WTC11 (cell line): ENCODE measurements at regions of chr6 and their contacts with region 1.

Region 1: DNA sequence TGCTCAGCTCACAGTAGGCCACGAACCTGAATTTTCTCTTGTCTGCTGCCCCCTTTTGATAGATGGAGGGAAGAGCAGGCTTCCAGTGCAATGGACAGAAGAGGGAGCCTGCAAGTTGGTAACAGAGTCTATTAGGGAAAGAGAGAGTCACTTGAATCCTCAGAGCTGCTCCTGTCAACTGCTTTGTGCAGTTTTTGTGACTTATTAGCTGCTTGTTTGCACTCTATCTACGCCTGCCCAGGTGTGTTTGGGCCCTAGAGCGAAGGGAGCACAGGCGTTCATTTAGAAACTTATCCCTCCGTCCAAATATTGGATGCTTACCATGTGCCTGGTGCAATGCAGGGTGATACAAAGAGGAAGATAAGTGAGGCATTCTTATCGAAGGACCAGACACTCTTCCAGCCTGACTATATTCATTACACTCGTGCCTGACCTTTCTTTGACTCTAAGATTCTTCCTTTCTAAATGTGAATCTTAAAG is 11.6 kb upstream of the SLC2A12 start:
- DNase-seq: peak; percentile 36
- ATAC-seq: peak; percentile 51
- H3K4me3 Mint-ChIP-seq: no peak overlapping the region
- H3K27ac Mint-ChIP-seq: peak overlapping the region; percentile 57; the same call in 1 of the 2 replicates
- H3K4me1 Mint-ChIP-seq: peaks cover 37% of the 10 kb centered on the region
- H3K27me3 Mint-ChIP-seq: no peaks in the 10 kb centered on the region
- CTCF ChIP-seq: peak; percentile 19; the same call in 1 of the 2 replicates

Region 2: DNA sequence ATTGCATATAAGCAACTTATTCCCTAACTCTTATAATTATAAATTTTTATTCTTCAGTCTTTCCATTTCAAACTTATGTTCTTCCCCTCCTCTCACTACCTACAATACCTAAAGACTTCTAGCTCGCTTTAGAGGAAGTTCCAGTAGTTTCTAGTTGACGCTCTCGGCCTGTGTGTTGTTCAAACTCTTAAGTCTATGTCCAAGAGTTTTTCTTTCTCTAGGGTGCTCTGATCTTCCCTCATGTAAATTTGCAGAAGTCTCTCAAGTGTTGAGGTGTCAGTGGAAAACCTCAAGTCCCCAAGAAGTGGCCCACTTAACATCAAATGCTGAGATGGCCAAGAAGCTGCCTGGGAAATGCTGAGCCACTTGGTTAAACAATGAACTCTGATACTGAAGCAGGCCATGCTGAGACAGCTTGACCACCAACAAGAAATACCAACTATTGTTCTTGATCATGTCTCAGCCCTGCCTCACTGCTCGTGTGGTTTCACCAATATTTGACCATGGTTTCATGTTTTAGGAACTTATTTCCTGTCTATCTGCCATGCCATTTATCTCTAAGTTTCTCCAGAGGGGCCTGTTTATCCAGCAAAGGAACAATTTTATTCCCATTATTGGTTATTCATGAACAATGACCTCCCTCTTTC is 276.0 kb before region 1 on chr6:
- CTCF ChIA-PET with region 1: no interaction called
- POLR2A ChIA-PET with region 1: no interaction called
- DNase-seq: no peak
- ATAC-seq: no peak
- H3K4me3 Mint-ChIP-seq: no peak overlapping the region
- H3K27ac Mint-ChIP-seq: no peak overlapping the region
- H3K4me1 Mint-ChIP-seq: peaks cover 6% of the 10 kb centered on the region
- H3K27me3 Mint-ChIP-seq: no peaks in the 10 kb centered on the region
- CTCF ChIP-seq: no peak

Region 3: DNA sequence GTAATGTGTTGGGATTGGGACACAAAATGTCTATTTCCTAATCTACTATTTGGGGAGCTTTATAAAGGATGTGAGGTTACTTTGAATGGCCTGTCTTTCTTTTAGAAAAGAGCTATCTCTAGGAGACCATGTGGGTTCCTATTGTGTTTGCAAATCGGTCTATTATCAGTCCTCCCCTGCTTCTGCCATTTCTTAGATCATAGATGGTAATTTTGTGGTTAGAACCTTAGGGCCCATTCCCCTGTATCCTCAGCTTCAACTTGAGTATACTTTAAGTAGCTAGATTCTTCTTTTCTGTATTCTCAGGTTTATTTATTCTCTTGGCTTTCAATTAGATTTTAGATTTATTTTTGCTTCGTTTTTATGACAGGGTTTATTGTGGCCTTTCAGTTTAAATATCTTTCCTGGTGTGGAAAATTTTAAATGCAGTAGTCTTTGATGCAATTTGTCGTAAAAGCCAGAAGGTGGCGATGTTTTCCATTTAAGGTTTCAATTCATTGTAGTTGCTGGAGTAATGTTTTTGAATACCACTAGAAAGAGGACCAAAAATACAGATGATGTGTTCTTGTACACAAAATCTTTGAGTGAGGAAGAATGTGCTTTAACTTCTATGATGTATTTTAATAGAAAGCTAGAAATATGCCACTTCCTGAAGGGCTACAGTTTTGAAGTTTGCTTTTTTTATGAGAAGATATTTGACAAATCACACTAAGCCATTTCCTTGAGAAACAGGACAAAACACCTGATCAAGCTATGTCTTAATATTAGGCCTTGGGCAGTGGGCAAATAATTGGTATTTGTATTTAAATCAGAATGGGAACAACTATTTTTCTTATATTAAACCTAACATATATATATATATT is 90.7 kb before region 1 on chr6:
- CTCF ChIA-PET with region 1: interaction called, 11 read pairs
- POLR2A ChIA-PET with region 1: no interaction called
- DNase-seq: no peak
- ATAC-seq: peak; percentile 61
- H3K4me3 Mint-ChIP-seq: no peak overlapping the region
- H3K27ac Mint-ChIP-seq: peak overlapping the region; percentile 58; the same call in 1 of the 2 replicates
- H3K4me1 Mint-ChIP-seq: peaks cover 47% of the 10 kb centered on the region
- H3K27me3 Mint-ChIP-seq: no peaks in the 10 kb centered on the region
- CTCF ChIP-seq: peak; percentile 45

Region 4: GRCh38 chr6:134002821-134003220 is 61.2 kb before region 1 on chr6:
- CTCF ChIA-PET with region 1: interaction called, 14 read pairs
- POLR2A ChIA-PET with region 1: no interaction called
- DNase-seq: no peak
- ATAC-seq: no peak
- H3K4me3 Mint-ChIP-seq: no peak overlapping the region
- H3K27ac Mint-ChIP-seq: no peak overlapping the region
- H3K4me1 Mint-ChIP-seq: peaks cover 14% of the 10 kb centered on the region
- H3K27me3 Mint-ChIP-seq: no peaks in the 10 kb centered on the region
- CTCF ChIP-seq: no peak

Region 5: GRCh38 chr6:134047673-134048072 is 16.3 kb before region 1 on chr6:
- CTCF ChIA-PET with region 1: interaction called, 16 read pairs
- POLR2A ChIA-PET with region 1: interaction called, 5 read pairs
- DNase-seq: no peak
- ATAC-seq: no peak
- H3K4me3 Mint-ChIP-seq: no peak overlapping the region
- H3K27ac Mint-ChIP-seq: peak overlapping the region; percentile 85; the same call in 1 of the 2 replicates
- H3K4me1 Mint-ChIP-seq: peaks cover 17% of the 10 kb centered on the region
- H3K27me3 Mint-ChIP-seq: no peaks in the 10 kb centered on the region; the same call in 1 of the 2 replicates
- CTCF ChIP-seq: no peak

Region 6: DNA sequence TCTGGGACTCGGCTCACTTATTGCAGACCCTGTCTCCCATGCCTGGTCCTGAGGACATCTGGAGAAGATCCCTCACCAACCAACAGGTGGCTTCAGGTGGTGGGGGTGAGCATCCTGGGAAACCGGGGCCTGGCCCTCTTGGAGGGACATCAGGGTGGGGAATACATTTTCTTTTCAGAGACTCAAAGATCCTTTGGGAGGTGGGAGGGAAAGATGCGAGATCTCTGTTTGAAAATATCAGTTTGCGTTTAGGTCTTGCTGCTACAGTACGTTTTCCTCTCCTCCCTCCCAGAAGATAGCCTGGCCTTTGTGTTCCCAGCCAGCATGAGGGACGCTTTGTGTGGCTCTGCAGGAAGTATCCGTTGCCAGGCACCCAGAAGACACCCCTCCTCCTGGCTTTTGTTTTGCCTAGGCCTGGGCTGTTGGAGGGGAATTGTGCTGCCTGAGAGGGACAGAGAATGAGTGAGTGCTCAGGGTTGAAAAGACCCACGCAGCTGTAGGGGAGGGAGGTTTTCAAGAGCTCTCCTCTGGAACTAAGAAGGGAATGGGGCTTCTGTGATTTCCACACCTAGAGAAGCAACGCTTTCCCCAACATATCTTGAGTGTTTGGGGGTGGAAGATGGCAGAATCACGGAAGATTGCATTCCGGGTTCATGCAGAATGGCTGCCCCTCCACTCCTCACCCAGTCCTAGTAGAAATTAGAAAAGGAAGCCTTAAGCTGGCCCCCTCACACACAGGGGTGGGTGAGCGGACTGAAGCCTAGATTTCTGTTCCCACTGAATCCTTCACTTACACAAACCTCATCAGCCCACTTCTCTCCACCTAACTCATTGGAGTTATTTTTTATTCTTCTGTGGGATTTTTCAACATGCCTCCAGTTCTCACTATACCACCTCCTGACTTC is 10.4 kb after region 1 on chr6:
- CTCF ChIA-PET with region 1: interaction called, 21 read pairs
- POLR2A ChIA-PET with region 1: interaction called, 3 read pairs
- DNase-seq: peak; percentile 75
- ATAC-seq: peak; percentile 99
- H3K4me3 Mint-ChIP-seq: peak overlapping the region; percentile 56
- H3K27ac Mint-ChIP-seq: peak overlapping the region; percentile 83
- H3K4me1 Mint-ChIP-seq: peaks cover 18% of the 10 kb centered on the region
- H3K27me3 Mint-ChIP-seq: no peaks in the 10 kb centered on the region
- CTCF ChIP-seq: no peak

Region 7: GRCh38 chr6:134340179-134340975 is 276.4 kb after region 1 on chr6:
- CTCF ChIA-PET with region 1: no interaction called
- POLR2A ChIA-PET with region 1: no interaction called
- DNase-seq: no peak
- ATAC-seq: no peak
- H3K4me3 Mint-ChIP-seq: no peak overlapping the region
- H3K27ac Mint-ChIP-seq: no peak overlapping the region
- H3K4me1 Mint-ChIP-seq: no peaks in the 10 kb centered on the region
- H3K27me3 Mint-ChIP-seq: no peaks in the 10 kb centered on the region
- CTCF ChIP-seq: no peak